Endothelial cell of umbilical vein (primary cell): ENCODE measurements at regions of chr2 and their contacts with region 1.

Region 1: GRCh38 chr2:21042958-21043743 is 722 bp downstream of the APOB start:
- DNase-seq: peak; percentile 55
- H3K4me3 ChIP-seq: no peak overlapping the region
- H3K27ac ChIP-seq: no peak overlapping the region
- H3K4me1 ChIP-seq: no peaks in the 10 kb centered on the region
- H3K27me3 ChIP-seq: no peaks in the 10 kb centered on the region
- CTCF ChIP-seq: peak; percentile 91 to 92
- POLR2A ChIP-seq: no peak

Region 2: GRCh38 chr2:21055879-21056790 is 13.0 kb after region 1 on chr2:
- CTCF ChIA-PET with region 1: interaction called, 10 read pairs
- POLR2A ChIA-PET with region 1: no interaction called
- dilution Hi-C with region 1: no loop called
- intact Hi-C with region 1: no loop called
- DNase-seq: no peak
- H3K4me3 ChIP-seq: no peak overlapping the region
- H3K27ac ChIP-seq: no peak overlapping the region
- H3K4me1 ChIP-seq: no peaks in the 10 kb centered on the region
- H3K27me3 ChIP-seq: peaks cover 3 to 4% of the 10 kb centered on the region in 2 experiments
- CTCF ChIP-seq: no peak
- POLR2A ChIP-seq: no peak

Region 3: DNA sequence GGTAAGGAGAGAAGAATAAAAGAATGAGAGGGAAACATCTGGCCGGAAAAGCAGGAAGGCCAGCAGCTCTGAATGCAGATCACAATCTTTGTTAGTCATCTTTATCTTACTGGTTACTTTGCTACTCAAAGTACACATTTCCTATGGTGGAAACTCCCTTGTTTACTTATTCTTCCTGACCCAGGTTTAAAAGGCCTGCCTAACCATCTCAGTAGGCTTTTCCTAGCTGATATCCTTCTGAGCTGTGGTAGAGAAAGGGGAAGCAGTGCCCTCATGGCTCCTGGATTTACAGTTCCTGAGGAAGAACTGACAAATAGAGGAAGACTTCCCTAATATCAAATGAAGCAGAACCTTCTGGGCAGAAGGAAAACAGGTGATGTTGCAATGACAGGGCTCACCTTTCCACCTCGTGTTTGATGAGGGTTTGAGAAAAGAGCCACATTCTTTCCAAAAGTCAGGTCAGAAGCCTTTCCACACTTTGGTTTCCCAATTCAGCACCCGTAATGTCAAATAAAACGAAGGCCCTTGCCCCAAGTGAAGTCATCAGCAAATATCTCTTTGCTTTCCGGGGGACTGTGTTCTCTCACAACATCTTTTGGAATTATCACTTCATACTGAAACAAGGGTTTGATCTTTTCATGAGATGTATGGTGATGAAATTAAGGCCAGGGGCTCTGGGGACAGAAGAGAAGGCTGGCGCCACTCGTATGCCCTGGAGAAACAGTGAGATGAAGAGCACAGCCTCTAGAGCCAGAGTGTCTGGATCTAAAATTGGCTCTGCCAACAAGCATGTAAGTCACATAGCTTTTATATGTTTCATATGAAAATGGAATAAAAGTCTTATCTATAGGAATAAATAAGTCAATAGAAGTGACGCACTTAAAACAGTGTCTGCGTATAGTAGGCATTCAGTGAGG is 27.4 kb after region 1 on chr2:
- CTCF ChIA-PET with region 1: interaction called, 5 read pairs
- POLR2A ChIA-PET with region 1: no interaction called
- dilution Hi-C with region 1: no loop called
- intact Hi-C with region 1: loop called (anchors 1 kb)
- DNase-seq: peak; percentile 84
- H3K4me3 ChIP-seq: no peak overlapping the region
- H3K27ac ChIP-seq: peak overlapping the region; percentile 66
- H3K4me1 ChIP-seq: peaks cover 14% of the 10 kb centered on the region
- H3K27me3 ChIP-seq: no peaks in the 10 kb centered on the region
- CTCF ChIP-seq: no peak
- POLR2A ChIP-seq: peak; percentile 50

Region 4: GRCh38 chr2:21118302-21118920 is 75.3 kb after region 1 on chr2:
- CTCF ChIA-PET with region 1: interaction called, 125 read pairs
- POLR2A ChIA-PET with region 1: no interaction called
- dilution Hi-C with region 1: no loop called
- intact Hi-C with region 1: loop called (anchors 1 kb)
- DNase-seq: peak; percentile 59
- H3K4me3 ChIP-seq: no peak overlapping the region
- H3K27ac ChIP-seq: no peak overlapping the region
- H3K4me1 ChIP-seq: no peaks in the 10 kb centered on the region
- H3K27me3 ChIP-seq: no peaks in the 10 kb centered on the region
- CTCF ChIP-seq: peak; percentile 18 to 45
- POLR2A ChIP-seq: no peak

Region 5: GRCh38 chr2:21165350-21165749 is 122.2 kb after region 1 on chr2:
- CTCF ChIA-PET with region 1: no interaction called
- POLR2A ChIA-PET with region 1: no interaction called
- dilution Hi-C with region 1: no loop called
- intact Hi-C with region 1: loop called (anchors 1 kb)
- DNase-seq: peak; percentile 11
- H3K4me3 ChIP-seq: no peak overlapping the region
- H3K27ac ChIP-seq: no peak overlapping the region
- H3K4me1 ChIP-seq: no peaks in the 10 kb centered on the region
- H3K27me3 ChIP-seq: no peaks in the 10 kb centered on the region
- CTCF ChIP-seq: no peak
- POLR2A ChIP-seq: no peak

Region 6: GRCh38 chr2:21256006-21256405 is 212.9 kb after region 1 on chr2:
- CTCF ChIA-PET with region 1: no interaction called
- POLR2A ChIA-PET with region 1: no interaction called
- dilution Hi-C with region 1: no loop called
- intact Hi-C with region 1: loop called (anchors 10 kb)
- DNase-seq: peak; percentile 66
- H3K4me3 ChIP-seq: no peak overlapping the region
- H3K27ac ChIP-seq: no peak overlapping the region
- H3K4me1 ChIP-seq: no peaks in the 10 kb centered on the region
- H3K27me3 ChIP-seq: no peaks in the 10 kb centered on the region
- CTCF ChIP-seq: no peak
- POLR2A ChIP-seq: no peak

Region 7: DNA sequence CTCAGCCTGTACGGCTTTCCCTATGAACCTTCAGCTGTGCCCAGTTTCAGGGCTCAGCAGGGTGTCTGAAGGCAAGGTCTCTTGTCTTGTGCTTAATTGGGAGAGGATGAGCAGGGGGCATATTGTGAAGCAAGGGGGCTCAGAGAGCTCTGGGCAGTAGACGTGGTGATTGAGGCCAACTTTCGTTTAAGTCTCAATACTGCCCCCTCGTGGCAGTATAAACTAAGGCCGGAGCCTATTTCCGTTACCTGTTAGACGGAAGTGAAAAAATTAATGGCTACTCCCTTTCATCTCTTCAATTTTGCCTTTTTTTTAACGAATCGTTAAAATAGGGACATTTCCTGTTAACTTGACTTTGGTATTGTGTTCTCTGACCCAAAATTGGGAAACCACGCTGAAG is 274.0 kb after region 1 on chr2:
- CTCF ChIA-PET with region 1: interaction called, 15 read pairs
- POLR2A ChIA-PET with region 1: no interaction called
- dilution Hi-C with region 1: no loop called
- intact Hi-C with region 1: loop called (anchors 1 kb)
- DNase-seq: peak; percentile 3
- H3K4me3 ChIP-seq: no peak overlapping the region
- H3K27ac ChIP-seq: no peak overlapping the region
- H3K4me1 ChIP-seq: no peaks in the 10 kb centered on the region
- H3K27me3 ChIP-seq: no peaks in the 10 kb centered on the region
- CTCF ChIP-seq: peak; percentile 37 to 44
- POLR2A ChIP-seq: no peak